CD4-positive, alpha-beta T cell (primary cell): ENCODE measurements at regions of chr16 and their contacts with region 1.

Region 1: GRCh38 chr16:12881740-12882139 is 19.7 kb upstream of the SHISA9 start:
- DNase-seq: no peak
- ATAC-seq: no peak
- H3K4me3 ChIP-seq: no peak overlapping the region
- H3K4me3 Mint-ChIP-seq: no peak overlapping the region
- H3K27ac ChIP-seq: no peak overlapping the region
- H3K27ac Mint-ChIP-seq: no peak overlapping the region
- H3K4me1 ChIP-seq: no peaks in the 10 kb centered on the region
- H3K4me1 Mint-ChIP-seq: no peaks in the 10 kb centered on the region
- H3K27me3 ChIP-seq: peaks cover 0 to 6% of the 10 kb centered on the region in 2 experiments
- H3K27me3 Mint-ChIP-seq: peaks cover 33% of the 10 kb centered on the region
- CTCF ChIP-seq: no peak

Region 2: GRCh38 chr16:12833957-12834356 is 47.8 kb before region 1 on chr16:
- CTCF ChIA-PET with region 1: no interaction called
- POLR2A ChIA-PET with region 1: no interaction called
- intact Hi-C with region 1: loop called in 1 of 2 experiments (anchors 5 kb)
- DNase-seq: no peak
- ATAC-seq: no peak
- H3K4me3 ChIP-seq: no peak overlapping the region
- H3K4me3 Mint-ChIP-seq: no peak overlapping the region
- H3K27ac ChIP-seq: no peak overlapping the region
- H3K27ac Mint-ChIP-seq: no peak overlapping the region
- H3K4me1 ChIP-seq: no peaks in the 10 kb centered on the region
- H3K4me1 Mint-ChIP-seq: no peaks in the 10 kb centered on the region
- H3K27me3 ChIP-seq: peaks cover 0 to 6% of the 10 kb centered on the region in 2 experiments
- H3K27me3 Mint-ChIP-seq: peaks cover 56% of the 10 kb centered on the region
- CTCF ChIP-seq: no peak

Region 3: GRCh38 chr16:12907670-12908233 is 26.0 kb after region 1 on chr16:
- CTCF ChIA-PET with region 1: no interaction called
- POLR2A ChIA-PET with region 1: no interaction called
- intact Hi-C with region 1: no loop called
- DNase-seq: peak in 2 of 14 experiments; percentile 4 to 8
- ATAC-seq: no peak
- H3K4me3 ChIP-seq: no peak overlapping the region
- H3K4me3 Mint-ChIP-seq: no peak overlapping the region
- H3K27ac ChIP-seq: no peak overlapping the region
- H3K27ac Mint-ChIP-seq: no peak overlapping the region
- H3K4me1 ChIP-seq: no peaks in the 10 kb centered on the region
- H3K4me1 Mint-ChIP-seq: no peaks in the 10 kb centered on the region
- H3K27me3 ChIP-seq: peaks cover 32 to 42% of the 10 kb centered on the region in 2 experiments
- H3K27me3 Mint-ChIP-seq: peaks cover 76% of the 10 kb centered on the region
- CTCF ChIP-seq: no peak

Region 4: DNA sequence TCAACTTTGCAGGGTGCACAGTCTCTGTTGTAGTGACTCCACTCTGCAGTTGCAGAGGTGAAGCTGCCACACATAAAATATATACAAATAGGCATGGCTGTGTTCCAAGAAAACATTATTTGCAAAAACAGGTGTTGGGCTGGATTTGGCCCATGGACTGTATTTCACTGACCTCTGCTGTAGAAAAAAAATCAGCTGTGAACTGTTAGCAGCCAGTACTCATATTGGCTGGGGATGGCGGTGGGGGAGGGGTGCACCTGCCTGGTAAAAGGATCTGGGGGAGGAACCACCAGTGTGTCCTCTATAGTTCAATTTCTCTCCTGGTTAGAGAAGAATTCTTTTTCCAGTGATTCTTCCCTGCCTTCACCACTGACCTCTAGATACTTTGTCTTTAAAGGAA is 69.7 kb after region 1 on chr16:
- CTCF ChIA-PET with region 1: no interaction called
- POLR2A ChIA-PET with region 1: no interaction called
- intact Hi-C with region 1: no loop called
- DNase-seq: no peak
- ATAC-seq: no peak
- H3K4me3 ChIP-seq: no peak overlapping the region
- H3K4me3 Mint-ChIP-seq: no peak overlapping the region
- H3K27ac ChIP-seq: no peak overlapping the region
- H3K27ac Mint-ChIP-seq: no peak overlapping the region
- H3K4me1 ChIP-seq: no peaks in the 10 kb centered on the region
- H3K4me1 Mint-ChIP-seq: no peaks in the 10 kb centered on the region
- H3K27me3 ChIP-seq: no peaks in the 10 kb centered on the region
- H3K27me3 Mint-ChIP-seq: peaks cover 32% of the 10 kb centered on the region
- CTCF ChIP-seq: no peak